ENCODE measurements at regions of chr6 and their contacts with region 1.

Region 1: DNA sequence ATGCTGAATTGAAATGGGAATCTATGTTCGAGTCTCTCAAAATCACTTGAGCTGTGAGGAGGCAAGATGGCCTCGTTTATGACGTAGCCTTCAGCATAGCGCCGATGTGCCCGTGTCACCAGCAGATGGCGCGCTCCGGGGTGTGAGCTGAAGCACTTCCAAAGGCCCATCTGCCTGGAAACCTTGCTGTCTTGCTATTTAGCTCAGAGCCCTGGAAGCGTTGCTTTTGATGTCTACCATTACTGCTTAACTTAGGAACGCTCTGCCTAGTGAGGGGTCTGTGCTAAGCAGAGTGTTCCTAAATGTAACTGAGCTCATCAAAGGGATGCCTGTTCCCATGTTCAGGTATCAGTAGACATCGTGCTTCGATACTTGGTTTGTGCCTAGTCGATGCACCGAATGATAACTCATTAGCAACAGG is 67.7 kb downstream of the SYCP2L start:
- DNase-seq: peak; percentile 73
- H3K4me3 ChIP-seq: no peak overlapping the region
- H3K27ac ChIP-seq: no peak overlapping the region
- H3K4me1 ChIP-seq: no peaks in the 10 kb centered on the region
- H3K27me3 ChIP-seq: peaks cover 0 to 2% of the 10 kb centered on the region in 2 experiments
- CTCF ChIP-seq: peak; percentile 91 to 96
- POLR2A ChIP-seq: no peak

Region 2: GRCh38 chr6:10854922-10855632 is 99.5 kb before region 1 on chr6:
- CTCF ChIA-PET with region 1: no interaction called
- POLR2A ChIA-PET with region 1: no interaction called
- dilution Hi-C with region 1: no loop called
- intact Hi-C with region 1: no loop called
- DNase-seq: no peak
- H3K4me3 ChIP-seq: no peak overlapping the region
- H3K27ac ChIP-seq: no peak overlapping the region
- H3K4me1 ChIP-seq: no peaks in the 10 kb centered on the region
- H3K27me3 ChIP-seq: no peaks in the 10 kb centered on the region
- CTCF ChIP-seq: no peak
- POLR2A ChIP-seq: no peak

Region 3: GRCh38 chr6:10939840-10940239 is 14.8 kb before region 1 on chr6:
- CTCF ChIA-PET with region 1: interaction called, 10 read pairs
- POLR2A ChIA-PET with region 1: no interaction called
- dilution Hi-C with region 1: no loop called
- intact Hi-C with region 1: no loop called
- DNase-seq: no peak
- H3K4me3 ChIP-seq: no peak overlapping the region
- H3K27ac ChIP-seq: no peak overlapping the region
- H3K4me1 ChIP-seq: no peaks in the 10 kb centered on the region
- H3K27me3 ChIP-seq: peaks cover 0 to 2% of the 10 kb centered on the region in 2 experiments
- CTCF ChIP-seq: no peak
- POLR2A ChIP-seq: no peak

Region 4: GRCh38 chr6:10970731-10971130 is 16.1 kb after region 1 on chr6:
- CTCF ChIA-PET with region 1: interaction called, 11 read pairs
- POLR2A ChIA-PET with region 1: no interaction called
- dilution Hi-C with region 1: no loop called
- intact Hi-C with region 1: no loop called
- DNase-seq: no peak
- H3K4me3 ChIP-seq: no peak overlapping the region
- H3K27ac ChIP-seq: no peak overlapping the region
- H3K4me1 ChIP-seq: no peaks in the 10 kb centered on the region
- H3K27me3 ChIP-seq: peaks cover 0 to 2% of the 10 kb centered on the region in 2 experiments
- CTCF ChIP-seq: no peak
- POLR2A ChIP-seq: no peak

Region 5: GRCh38 chr6:10981409-10981808 is 26.8 kb after region 1 on chr6:
- CTCF ChIA-PET with region 1: interaction called, 12 read pairs
- POLR2A ChIA-PET with region 1: no interaction called
- dilution Hi-C with region 1: no loop called
- intact Hi-C with region 1: no loop called
- DNase-seq: no peak
- H3K4me3 ChIP-seq: no peak overlapping the region
- H3K27ac ChIP-seq: no peak overlapping the region
- H3K4me1 ChIP-seq: no peaks in the 10 kb centered on the region
- H3K27me3 ChIP-seq: peaks cover 0 to 2% of the 10 kb centered on the region in 2 experiments
- CTCF ChIP-seq: no peak
- POLR2A ChIP-seq: no peak

Region 6: DNA sequence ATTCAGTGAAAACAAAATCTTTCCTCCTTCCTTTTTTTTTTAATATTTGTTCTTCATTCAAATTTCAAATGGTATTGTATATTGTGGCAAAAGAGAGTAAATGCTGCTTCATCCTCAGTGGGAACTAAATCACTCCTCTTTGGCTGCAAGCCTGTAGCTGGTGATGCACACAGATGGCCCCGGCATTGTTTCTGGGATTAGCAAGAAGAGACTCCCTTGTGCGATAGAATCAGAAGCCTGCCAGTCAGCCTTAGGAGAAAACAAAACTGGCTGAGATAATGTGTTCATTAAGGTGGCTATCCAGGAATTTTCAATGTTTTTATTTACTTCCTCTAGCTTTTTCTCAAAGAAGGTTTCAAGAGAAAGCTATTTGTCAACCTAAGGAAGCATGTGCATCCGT is 110.2 kb after region 1 on chr6:
- CTCF ChIA-PET with region 1: interaction called, 201 read pairs
- POLR2A ChIA-PET with region 1: no interaction called
- dilution Hi-C with region 1: no loop called
- intact Hi-C with region 1: loop called (anchors 1 kb)
- DNase-seq: no peak
- H3K4me3 ChIP-seq: no peak overlapping the region
- H3K27ac ChIP-seq: no peak overlapping the region
- H3K4me1 ChIP-seq: no peaks in the 10 kb centered on the region
- H3K27me3 ChIP-seq: peaks cover 0 to 3% of the 10 kb centered on the region in 2 experiments
- CTCF ChIP-seq: no peak
- POLR2A ChIP-seq: no peak

Region 7: DNA sequence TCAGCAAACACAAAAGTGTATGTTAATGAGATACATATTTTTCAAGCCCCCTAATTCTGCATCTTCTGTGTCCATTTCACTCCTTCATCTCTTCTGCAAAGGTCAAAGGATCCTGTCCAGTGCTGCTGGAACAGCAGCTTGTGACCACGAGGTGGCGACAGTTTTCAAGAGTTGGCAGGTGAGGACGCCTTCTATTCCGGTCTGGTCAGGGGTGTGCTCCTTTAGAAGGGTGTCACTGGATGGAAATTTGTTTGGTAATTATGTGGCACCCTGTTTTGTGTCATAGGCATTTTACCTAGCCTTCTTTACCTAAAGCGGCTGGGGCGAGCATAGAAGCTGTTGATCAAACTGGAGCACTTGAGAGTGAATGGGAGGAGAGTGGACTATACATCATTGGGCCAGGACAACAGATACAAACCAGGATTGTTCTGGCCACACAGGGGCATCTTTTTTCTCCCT is 189.8 kb after region 1 on chr6:
- CTCF ChIA-PET with region 1: interaction called, 12 read pairs
- POLR2A ChIA-PET with region 1: no interaction called
- dilution Hi-C with region 1: no loop called
- intact Hi-C with region 1: loop called (anchors 1 kb)
- DNase-seq: peak; percentile 70
- H3K4me3 ChIP-seq: no peak overlapping the region
- H3K27ac ChIP-seq: no peak overlapping the region
- H3K4me1 ChIP-seq: no peaks in the 10 kb centered on the region
- H3K27me3 ChIP-seq: no peaks in the 10 kb centered on the region
- CTCF ChIP-seq: peak; percentile 86 to 95
- POLR2A ChIP-seq: no peak